Heart left ventricle (tissue), 16 donors: ENCODE measurements at regions of chr3 and their contacts with region 1.

Region 1: DNA sequence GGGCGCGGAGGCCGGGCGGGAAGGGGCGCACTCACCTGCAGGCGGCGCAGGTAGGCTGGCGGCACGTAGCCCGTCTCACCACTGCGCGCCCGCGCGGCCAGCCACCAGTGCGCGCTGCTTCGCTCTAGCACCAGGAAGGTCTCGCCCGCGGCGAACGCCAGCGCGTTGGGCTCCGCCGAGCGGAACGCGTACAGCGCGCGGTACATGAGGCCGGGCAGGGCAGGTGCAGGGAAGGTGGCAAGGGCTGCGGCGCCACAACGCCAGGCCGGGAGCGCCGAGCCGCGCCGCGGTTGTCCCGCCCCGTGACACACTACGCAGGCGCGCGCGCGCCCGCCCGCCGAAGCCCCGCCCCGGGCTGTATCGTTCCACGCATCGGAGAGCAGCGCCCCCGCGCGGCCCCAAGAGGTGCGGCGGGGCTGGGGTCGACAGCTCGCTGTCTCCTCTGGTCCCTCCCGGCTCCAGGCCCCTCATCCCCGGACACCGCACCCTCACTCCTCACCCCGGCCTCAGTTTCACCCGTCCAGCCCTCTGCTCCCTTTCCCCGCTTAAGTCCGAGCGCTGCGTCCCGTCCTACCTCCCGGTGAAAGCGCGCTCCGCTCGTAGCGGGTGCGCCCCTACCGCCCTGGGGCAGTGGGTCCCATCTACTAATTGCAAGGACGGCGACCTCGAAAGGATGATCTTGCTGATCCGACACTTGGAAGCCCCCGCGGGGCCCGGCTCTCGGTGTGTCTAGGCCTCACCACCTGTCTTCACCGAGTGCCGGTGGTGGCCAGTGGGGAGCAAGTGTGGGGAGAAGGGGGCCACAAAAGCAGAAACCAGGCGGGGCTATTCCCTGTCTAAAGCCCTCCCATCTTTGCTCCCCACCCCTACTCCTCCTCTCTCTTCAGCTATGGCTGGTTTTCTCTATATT is at the start of gene NCKIPSD:
- DNase-seq: peak; percentile 88 to 96 (median 92)
- ATAC-seq: peak; percentile 69 to 94 (median 89)
- H3K4me3 ChIP-seq: peak within 1 kb of the TSS; percentile 80 to 100 (median 94)
- H3K27ac ChIP-seq: peak within 1 kb of the TSS; percentile 71 to 92 (median 86)
- H3K4me1 ChIP-seq: peaks cover 8 to 45% (median 34%) of the 10 kb centered on the region in 12 donors
- H3K27me3 ChIP-seq: no peaks in the 10 kb centered on the region
- CTCF ChIP-seq: peak; percentile 76 to 94 (median 88)
- POLR2A ChIP-seq: peak; percentile 32 to 92
- total RNA-seq, gene NCKIPSD: 9.8 to 47.6 (median 14.7) TPM

Region 2: DNA sequence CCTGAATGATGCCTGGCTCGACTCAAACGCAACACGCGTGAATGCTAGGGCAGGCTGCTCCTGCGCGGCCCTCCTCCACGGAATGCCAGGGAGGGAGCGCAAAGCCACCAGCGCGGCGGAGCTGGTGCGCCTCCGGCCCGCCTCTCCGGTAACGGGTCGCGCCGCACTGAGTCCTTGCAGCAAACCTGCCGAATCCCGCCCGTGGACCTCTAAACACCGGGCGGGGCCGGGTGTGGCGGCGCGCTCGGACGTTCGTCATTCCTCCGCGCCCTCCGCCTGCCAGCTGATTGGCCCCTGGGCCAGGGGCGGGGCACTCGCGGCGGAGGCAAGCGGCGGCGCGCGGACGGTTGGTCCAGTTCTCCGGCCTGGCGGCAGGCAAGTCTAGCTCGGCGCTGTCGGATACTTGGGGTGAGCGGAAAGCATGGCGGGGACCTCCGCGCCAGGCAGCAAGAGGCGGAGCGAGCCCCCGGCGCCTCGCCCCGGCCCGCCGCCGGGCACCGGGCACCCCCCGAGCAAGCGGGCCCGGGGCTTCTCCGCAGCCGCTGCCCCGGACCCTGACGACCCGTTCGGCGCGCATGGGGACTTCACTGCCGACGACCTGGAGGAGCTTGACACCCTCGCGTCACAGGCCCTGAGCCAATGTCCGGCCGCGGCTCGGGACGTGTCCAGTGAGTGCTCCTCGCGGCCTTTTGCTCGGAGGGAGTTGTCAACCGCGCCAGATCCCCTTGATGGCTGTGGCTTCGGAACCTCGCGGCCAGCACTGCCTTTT is 239.2 kb before region 1 on chr3 and contains the start of gene ATRIP:
- intact Hi-C with region 1: loop called in 1 of 10 experiments (anchors 5 kb)
- DNase-seq: peak; percentile 91 to 96 (median 93)
- ATAC-seq: peak; percentile 95 to 99 (median 99)
- H3K4me3 ChIP-seq: peak within 1 kb of the TSS; percentile 60 to 98 (median 84)
- H3K27ac ChIP-seq: peak within 1 kb of the TSS; percentile 49 to 94 (median 88)
- H3K4me1 ChIP-seq: peaks cover 4 to 31% (median 23%) of the 10 kb centered on the region in 12 donors
- H3K27me3 ChIP-seq: no peaks in the 10 kb centered on the region
- CTCF ChIP-seq: peak in 3 of 12 donors; percentile 8 to 40 (median 9)
- POLR2A ChIP-seq: peak; percentile 90 to 98
- total RNA-seq, gene ATRIP: 2.1 to 5.0 (median 3.6) TPM

Region 3: GRCh38 chr3:48465531-48466378 is 220.1 kb before region 1 on chr3:
- intact Hi-C with region 1: loop called in 2 of 10 experiments (anchors 2 to 10 kb)
- DNase-seq: peak; percentile 95 to 99 (median 98)
- ATAC-seq: peak; percentile 95 to 96 (median 95)
- H3K4me3 ChIP-seq: peak overlapping the region; percentile 24 to 84 (median 62)
- H3K27ac ChIP-seq: peak overlapping the region; percentile 92 to 100 (median 99)
- H3K4me1 ChIP-seq: peaks cover 13 to 63% (median 55%) of the 10 kb centered on the region in 12 donors
- H3K27me3 ChIP-seq: no peaks in the 10 kb centered on the region
- CTCF ChIP-seq: peak; percentile 55 to 90 (median 76)
- POLR2A ChIP-seq: peak in 1 of 2 donors; percentile 81

Region 4: DNA sequence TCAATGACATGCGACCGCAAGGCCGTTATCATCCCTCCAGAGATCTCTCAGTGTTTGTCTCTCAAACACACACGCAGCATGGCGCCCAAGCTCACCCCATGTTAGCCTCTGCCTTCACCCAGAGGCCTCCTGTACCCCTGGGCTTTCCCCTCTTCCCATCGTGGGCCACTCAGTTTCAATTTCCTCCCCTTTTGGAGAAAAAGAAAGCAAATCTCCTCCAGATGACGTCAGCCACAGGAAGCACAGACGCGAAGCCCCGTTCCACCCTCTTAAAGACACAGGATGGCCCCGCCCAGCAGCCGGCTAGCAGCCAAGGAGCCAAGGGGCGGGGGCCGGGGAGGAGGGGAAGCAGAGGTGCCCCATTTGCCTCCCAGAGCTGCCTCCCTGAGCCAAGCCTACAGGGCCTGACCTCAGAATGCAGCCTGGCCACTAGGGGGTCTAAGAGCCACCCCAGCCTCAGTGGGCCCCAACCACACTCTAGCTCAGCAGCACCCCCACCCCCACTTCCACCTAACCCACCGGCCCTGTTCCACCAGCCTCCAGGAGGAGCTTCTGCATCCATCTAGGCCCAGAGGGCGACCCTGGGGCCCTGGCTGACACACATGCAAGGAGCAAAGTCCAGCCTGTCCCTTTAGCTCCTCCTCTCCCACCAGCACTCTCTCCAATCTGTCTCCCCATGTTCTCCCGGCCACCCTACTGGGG is 212.8 kb before region 1 on chr3:
- intact Hi-C with region 1: loop called in 1 of 10 experiments (anchors 10 kb)
- DNase-seq: peak; percentile 92 to 96 (median 94)
- ATAC-seq: peak; percentile 84 to 95 (median 93)
- H3K4me3 ChIP-seq: peak overlapping the region; percentile 35 to 88 (median 72)
- H3K27ac ChIP-seq: peak overlapping the region; percentile 77 to 99 (median 97)
- H3K4me1 ChIP-seq: peaks cover 11 to 63% (median 52%) of the 10 kb centered on the region in 12 donors
- H3K27me3 ChIP-seq: no peaks in the 10 kb centered on the region
- CTCF ChIP-seq: peak in 11 of 12 donors; percentile 15 to 63 (median 46)
- POLR2A ChIP-seq: peak in 1 of 2 donors; percentile 72

Region 5: GRCh38 chr3:48739955-48740823 is 54.3 kb after region 1 on chr3:
- intact Hi-C with region 1: loop called in 5 of 10 experiments (anchors 2 to 5 kb)
- DNase-seq: peak; percentile 88 to 97 (median 95)
- ATAC-seq: peak; percentile 76 to 92 (median 91)
- H3K4me3 ChIP-seq: peak overlapping the region in 7 of 12 donors; percentile 7 to 31 (median 23)
- H3K27ac ChIP-seq: peak overlapping the region; percentile 77 to 94 (median 85)
- H3K4me1 ChIP-seq: peaks cover 9 to 60% (median 47%) of the 10 kb centered on the region in 12 donors
- H3K27me3 ChIP-seq: no peaks in the 10 kb centered on the region
- CTCF ChIP-seq: peak; percentile 69 to 95 (median 90)
- POLR2A ChIP-seq: no peak

Region 6: DNA sequence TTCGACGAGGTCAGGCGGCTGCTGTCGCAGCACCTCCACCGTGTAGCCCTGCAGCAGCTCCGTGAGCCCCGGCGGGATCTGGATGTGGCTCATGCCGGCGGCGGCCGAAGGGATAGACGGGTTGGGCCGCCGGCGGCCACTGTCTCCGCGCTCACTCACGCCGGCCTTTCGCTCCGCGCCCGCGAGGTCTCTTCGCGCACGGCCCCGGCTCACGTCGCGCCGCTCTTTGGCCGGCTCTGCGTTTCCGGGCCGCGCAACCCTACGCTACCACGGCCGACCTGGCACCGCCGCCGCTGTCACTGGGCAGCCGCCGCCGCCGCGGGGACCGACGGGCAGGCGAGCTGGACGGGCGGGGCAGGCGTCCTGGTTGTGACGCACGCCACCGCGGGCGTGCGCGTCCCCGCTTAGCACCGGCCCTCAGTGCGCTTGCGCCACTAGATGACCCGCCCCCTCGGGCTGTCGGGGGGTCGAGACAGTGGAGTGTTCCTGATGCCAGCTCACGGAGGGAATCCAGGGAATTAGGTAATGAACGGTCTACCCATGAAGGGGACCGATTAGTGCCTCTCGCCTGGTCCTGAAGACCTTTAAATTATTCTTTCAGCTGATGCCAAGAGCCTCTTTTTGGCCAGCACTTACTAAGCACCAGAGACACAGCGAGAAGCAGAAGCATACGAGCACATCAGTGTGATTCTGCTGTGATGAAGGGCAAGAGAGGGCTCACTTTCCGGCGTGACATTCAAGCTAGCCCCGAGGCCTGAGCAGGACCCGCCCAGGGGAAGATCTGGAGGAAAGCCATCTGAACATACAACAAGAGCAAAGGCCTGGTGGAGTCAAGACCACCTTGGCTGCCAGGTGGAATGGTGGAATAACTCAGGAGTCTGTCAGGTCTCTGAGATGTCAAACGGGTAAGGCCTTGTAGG is 161.9 kb after region 1 on chr3 and contains the start of gene PRKAR2A:
- intact Hi-C with region 1: loop called in 1 of 10 experiments (anchors 5 kb)
- DNase-seq: peak; percentile 90 to 95 (median 93)
- ATAC-seq: peak; percentile 88 to 97 (median 96)
- H3K4me3 ChIP-seq: peak within 1 kb of the TSS; percentile 65 to 94 (median 84)
- H3K27ac ChIP-seq: peak within 1 kb of the TSS; percentile 91 to 99 (median 95)
- H3K4me1 ChIP-seq: peaks cover 10 to 30% (median 20%) of the 10 kb centered on the region in 12 donors
- H3K27me3 ChIP-seq: no peaks in the 10 kb centered on the region
- CTCF ChIP-seq: no peak
- POLR2A ChIP-seq: peak; percentile 20 to 90
- total RNA-seq, gene PRKAR2A: 33.2 to 71.6 (median 44.9) TPM

Region 7: GRCh38 chr3:49217688-49218470 is 532.0 kb after region 1 on chr3:
- intact Hi-C with region 1: no loop called
- DNase-seq: peak in 4 of 5 donors; percentile 22 to 68 (median 49)
- ATAC-seq: peak; percentile 80 to 83 (median 81)
- H3K4me3 ChIP-seq: no peak overlapping the region
- H3K27ac ChIP-seq: peak overlapping the region; percentile 51 to 94 (median 84)
- H3K4me1 ChIP-seq: peaks cover 0 to 25% (median 16%) of the 10 kb centered on the region in 12 donors
- H3K27me3 ChIP-seq: no peaks in the 10 kb centered on the region
- CTCF ChIP-seq: no peak
- POLR2A ChIP-seq: no peak